B cell (primary cell): ENCODE measurements at regions of chr19 and their contacts with region 1.

Region 1: GRCh38 chr19:40348125-40348913 is at the starts of genes C19orf47 and PLD3:
- DNase-seq: peak; percentile 99
- ATAC-seq: peak; percentile 94
- H3K4me3 ChIP-seq: peak within 1 kb of the TSS; percentile 59 to 90 (median 86)
- H3K4me3 Mint-ChIP-seq: peak within 1 kb of the TSS; percentile 91
- H3K27ac ChIP-seq: peak within 1 kb of the TSS; percentile 40 to 83
- H3K27ac Mint-ChIP-seq: peak within 1 kb of the TSS; percentile 97
- H3K4me1 ChIP-seq: peaks cover 12 to 17% of the 10 kb centered on the region in 2 donors
- H3K4me1 Mint-ChIP-seq: peaks cover 27% of the 10 kb centered on the region
- H3K27me3 ChIP-seq: no peaks in the 10 kb centered on the region
- H3K27me3 Mint-ChIP-seq: no peaks in the 10 kb centered on the region
- CTCF ChIP-seq: no peak
- total RNA-seq, gene C19orf47: 14.3 and 16.7 TPM in 2 replicates
- total RNA-seq, gene PLD3: 61.7 and 69.0 TPM in 2 replicates

Region 2: GRCh38 chr19:39915101-39915847 is 433.0 kb before region 1 on chr19:
- CTCF ChIA-PET with region 1: no interaction called
- POLR2A ChIA-PET with region 1: no interaction called
- intact Hi-C with region 1: no loop called
- DNase-seq: no peak
- ATAC-seq: no peak
- H3K4me3 ChIP-seq: no peak overlapping the region
- H3K4me3 Mint-ChIP-seq: no peak overlapping the region
- H3K27ac ChIP-seq: no peak overlapping the region
- H3K27ac Mint-ChIP-seq: no peak overlapping the region
- H3K4me1 ChIP-seq: peaks cover 0 to 10% of the 10 kb centered on the region in 2 donors
- H3K4me1 Mint-ChIP-seq: peaks cover 8% of the 10 kb centered on the region
- H3K27me3 ChIP-seq: no peaks in the 10 kb centered on the region
- H3K27me3 Mint-ChIP-seq: peaks cover 3% of the 10 kb centered on the region
- CTCF ChIP-seq: no peak

Region 3: GRCh38 chr19:40274585-40275552 is 73.5 kb before region 1 on chr19:
- CTCF ChIA-PET with region 1: no interaction called
- POLR2A ChIA-PET with region 1: no interaction called
- intact Hi-C with region 1: no loop called
- DNase-seq: peak; percentile 54
- ATAC-seq: peak; percentile 64
- H3K4me3 ChIP-seq: peak overlapping the region in 2 of 5 experiments; percentile 3
- H3K4me3 Mint-ChIP-seq: peak overlapping the region; percentile 62
- H3K27ac ChIP-seq: peak overlapping the region in 1 of 2 donors; percentile 43
- H3K27ac Mint-ChIP-seq: peak overlapping the region; percentile 51
- H3K4me1 ChIP-seq: peaks cover 34 to 40% of the 10 kb centered on the region in 2 donors
- H3K4me1 Mint-ChIP-seq: peaks cover 66% of the 10 kb centered on the region
- H3K27me3 ChIP-seq: no peaks in the 10 kb centered on the region
- H3K27me3 Mint-ChIP-seq: no peaks in the 10 kb centered on the region
- CTCF ChIP-seq: no peak

Region 4: GRCh38 chr19:40285353-40286234 is 62.7 kb before region 1 on chr19:
- CTCF ChIA-PET with region 1: no interaction called
- POLR2A ChIA-PET with region 1: interaction called, 11 read pairs
- intact Hi-C with region 1: loop called (anchors 1 kb)
- DNase-seq: peak; percentile 100
- ATAC-seq: peak; percentile 74
- H3K4me3 ChIP-seq: peak overlapping the region in 4 of 5 experiments; percentile 68 to 89 (median 78)
- H3K4me3 Mint-ChIP-seq: peak overlapping the region; percentile 87
- H3K27ac ChIP-seq: peak overlapping the region; percentile 99 to 100
- H3K27ac Mint-ChIP-seq: peak overlapping the region; percentile 97
- H3K4me1 ChIP-seq: peaks cover 40 to 54% of the 10 kb centered on the region in 2 donors
- H3K4me1 Mint-ChIP-seq: peaks cover 53% of the 10 kb centered on the region
- H3K27me3 ChIP-seq: no peaks in the 10 kb centered on the region
- H3K27me3 Mint-ChIP-seq: no peaks in the 10 kb centered on the region
- CTCF ChIP-seq: no peak

Region 5: GRCh38 chr19:40331069-40331468 is 17.2 kb before region 1 on chr19:
- CTCF ChIA-PET with region 1: no interaction called
- POLR2A ChIA-PET with region 1: no interaction called
- intact Hi-C with region 1: no loop called
- DNase-seq: no peak
- ATAC-seq: no peak
- H3K4me3 ChIP-seq: no peak overlapping the region
- H3K4me3 Mint-ChIP-seq: no peak overlapping the region
- H3K27ac ChIP-seq: no peak overlapping the region
- H3K27ac Mint-ChIP-seq: no peak overlapping the region
- H3K4me1 ChIP-seq: no peaks in the 10 kb centered on the region
- H3K4me1 Mint-ChIP-seq: no peaks in the 10 kb centered on the region
- H3K27me3 ChIP-seq: no peaks in the 10 kb centered on the region
- H3K27me3 Mint-ChIP-seq: no peaks in the 10 kb centered on the region
- CTCF ChIP-seq: no peak

Region 6: DNA sequence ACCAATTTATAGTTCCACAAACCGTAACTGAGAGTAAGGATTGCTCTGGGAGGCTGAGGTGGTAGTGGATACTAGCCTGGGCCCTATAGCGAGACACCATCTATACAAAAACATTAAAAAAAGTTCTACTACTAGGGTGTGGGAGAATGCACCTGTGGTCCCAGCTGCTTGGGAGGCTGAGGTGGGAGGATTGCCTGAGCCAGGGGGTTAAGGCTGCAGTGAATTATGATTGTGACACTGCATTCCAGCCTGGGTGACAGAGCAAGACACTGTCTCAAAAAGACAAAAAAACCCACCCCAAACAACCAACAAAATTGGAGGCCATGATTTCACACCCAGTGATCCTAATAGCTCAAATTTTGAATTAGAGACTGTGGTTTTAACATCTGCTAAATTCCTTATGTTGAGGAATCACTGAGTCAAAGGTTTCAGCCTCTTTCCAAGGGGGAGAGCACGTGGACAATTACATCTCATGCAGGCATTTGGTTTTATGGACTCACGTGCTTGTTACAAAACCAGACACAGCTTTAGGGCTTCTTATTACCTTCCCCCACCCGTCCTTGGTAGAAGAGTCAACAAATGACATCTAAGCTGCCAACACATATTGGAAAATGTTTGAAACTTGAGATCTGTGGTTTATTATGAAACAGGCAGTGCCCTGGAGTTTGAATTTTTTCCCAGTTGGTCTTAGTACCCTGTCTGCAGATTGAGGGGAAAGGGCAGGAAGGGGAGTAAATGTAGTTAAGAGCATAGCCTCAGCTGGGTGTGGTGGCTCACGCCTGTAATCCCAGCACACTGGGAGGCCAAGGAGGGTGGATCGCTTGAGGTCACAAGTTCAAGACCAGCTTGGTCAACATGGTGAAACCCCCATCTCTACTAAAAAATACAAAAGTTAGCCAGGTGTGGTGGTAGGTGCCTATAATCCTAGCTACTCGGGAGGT is 483.5 kb after region 1 on chr19:
- CTCF ChIA-PET with region 1: no interaction called
- POLR2A ChIA-PET with region 1: no interaction called
- intact Hi-C with region 1: no loop called
- DNase-seq: peak; percentile 0
- ATAC-seq: no peak
- H3K4me3 ChIP-seq: no peak overlapping the region
- H3K4me3 Mint-ChIP-seq: no peak overlapping the region
- H3K27ac ChIP-seq: no peak overlapping the region
- H3K27ac Mint-ChIP-seq: no peak overlapping the region
- H3K4me1 ChIP-seq: no peaks in the 10 kb centered on the region
- H3K4me1 Mint-ChIP-seq: no peaks in the 10 kb centered on the region
- H3K27me3 ChIP-seq: no peaks in the 10 kb centered on the region
- H3K27me3 Mint-ChIP-seq: no peaks in the 10 kb centered on the region
- CTCF ChIP-seq: no peak